ENCODE measurements at regions of chr6 and their contacts with region 1.

Region 1: DNA sequence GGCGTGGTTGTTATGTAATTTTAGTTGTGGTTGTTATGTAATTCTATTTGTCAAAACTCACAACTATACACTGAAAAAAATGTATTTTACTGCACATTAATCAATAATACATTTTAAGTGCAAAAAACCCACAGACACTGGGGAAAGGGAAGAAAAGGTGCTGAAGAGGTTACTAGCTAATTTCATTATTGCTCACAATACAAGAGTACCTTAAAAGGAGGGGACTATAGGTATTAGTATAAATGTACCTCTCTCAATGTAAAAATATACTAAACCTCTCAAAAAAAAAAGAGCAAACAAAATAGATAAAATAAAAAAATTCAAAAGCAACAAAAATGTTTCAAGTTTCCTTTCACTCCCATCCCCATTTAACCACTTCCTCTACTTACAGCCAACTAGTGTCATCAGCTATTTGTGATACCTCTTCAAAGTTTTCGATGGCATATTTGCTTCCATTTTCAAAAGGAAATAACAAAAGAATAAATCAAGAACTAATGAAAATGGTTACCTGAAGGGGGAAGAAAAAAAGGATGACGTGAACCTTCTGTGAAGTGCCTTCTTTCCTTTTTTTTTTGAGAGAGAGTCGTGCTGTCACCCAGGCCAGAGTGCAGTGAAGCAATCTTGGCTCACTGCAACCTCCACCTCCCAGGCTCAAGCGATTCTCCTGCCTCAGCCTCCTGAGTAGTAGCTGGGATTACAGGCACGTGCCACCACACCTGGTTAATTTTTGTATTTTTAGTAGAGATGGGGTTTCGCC is 30.2 kb downstream of the RANBP9 start:
- DNase-seq: peak in 7 of 9 donors; percentile 41 to 78 (median 65)
- ATAC-seq: peak; percentile 82
- H3K4me3 ChIP-seq: peak overlapping the region; percentile 4
- H3K4me3 Mint-ChIP-seq: peak overlapping the region; percentile 38 to 75 (median 58)
- H3K27ac ChIP-seq: peak overlapping the region; percentile 54
- H3K27ac Mint-ChIP-seq: peak overlapping the region; percentile 63 to 92 (median 86)
- H3K4me1 ChIP-seq: peaks cover 36 to 42% of the 10 kb centered on the region in 2 donors
- H3K4me1 Mint-ChIP-seq: peaks cover 34 to 74% (median 65%) of the 10 kb centered on the region in 7 donors
- H3K27me3 ChIP-seq: no peaks in the 10 kb centered on the region
- H3K27me3 Mint-ChIP-seq: no peaks in the 10 kb centered on the region

Region 2: GRCh38 chr6:13660273-13660672 is 21.2 kb before region 1 on chr6:
- CTCF ChIA-PET with region 1: no interaction called
- POLR2A ChIA-PET with region 1: no interaction called
- intact Hi-C with region 1: no loop called
- DNase-seq: no peak
- ATAC-seq: no peak
- H3K4me3 ChIP-seq: no peak overlapping the region
- H3K4me3 Mint-ChIP-seq: peak overlapping the region in 2 of 10 donors; percentile 27 to 34
- H3K27ac ChIP-seq: no peak overlapping the region
- H3K27ac Mint-ChIP-seq: peak overlapping the region in 4 of 9 donors; percentile 23 to 68 (median 42)
- H3K4me1 ChIP-seq: peaks cover 5 to 34% of the 10 kb centered on the region in 2 donors
- H3K4me1 Mint-ChIP-seq: peaks cover 48 to 87% (median 77%) of the 10 kb centered on the region in 7 donors
- H3K27me3 ChIP-seq: no peaks in the 10 kb centered on the region
- H3K27me3 Mint-ChIP-seq: no peaks in the 10 kb centered on the region

Region 3: DNA sequence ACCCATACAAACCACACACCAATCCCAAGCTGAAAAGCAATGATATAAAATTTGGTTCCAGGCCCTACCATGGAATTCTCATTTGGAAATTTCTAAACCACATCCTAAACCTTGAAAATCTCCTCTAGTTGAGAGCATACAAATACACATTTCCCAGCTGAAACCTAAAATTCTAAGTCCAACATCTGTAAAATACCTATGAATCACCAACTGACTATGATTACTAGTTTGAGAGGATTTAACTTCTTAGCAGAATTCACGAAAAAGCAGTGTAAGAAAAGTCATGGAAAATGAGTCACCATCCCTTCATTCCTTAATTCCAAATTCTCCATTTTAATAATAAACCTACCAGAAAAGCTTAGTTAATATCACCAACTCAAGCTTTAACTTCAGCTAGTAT is 14.7 kb after region 1 on chr6:
- CTCF ChIA-PET with region 1: interaction called, 5 read pairs
- POLR2A ChIA-PET with region 1: interaction called, 10 read pairs
- intact Hi-C with region 1: loop called (anchors 1 to 2 kb)
- DNase-seq: no peak
- ATAC-seq: no peak
- H3K4me3 ChIP-seq: no peak overlapping the region
- H3K4me3 Mint-ChIP-seq: peak overlapping the region in 4 of 10 donors; percentile 28 to 66 (median 39)
- H3K27ac ChIP-seq: peak overlapping the region; percentile 60
- H3K27ac Mint-ChIP-seq: peak overlapping the region in 7 of 9 donors; percentile 56 to 92 (median 83)
- H3K4me1 ChIP-seq: peaks cover 31 to 42% of the 10 kb centered on the region in 2 donors
- H3K4me1 Mint-ChIP-seq: peaks cover 42 to 82% (median 73%) of the 10 kb centered on the region in 7 donors
- H3K27me3 ChIP-seq: no peaks in the 10 kb centered on the region
- H3K27me3 Mint-ChIP-seq: no peaks in the 10 kb centered on the region

Region 4: DNA sequence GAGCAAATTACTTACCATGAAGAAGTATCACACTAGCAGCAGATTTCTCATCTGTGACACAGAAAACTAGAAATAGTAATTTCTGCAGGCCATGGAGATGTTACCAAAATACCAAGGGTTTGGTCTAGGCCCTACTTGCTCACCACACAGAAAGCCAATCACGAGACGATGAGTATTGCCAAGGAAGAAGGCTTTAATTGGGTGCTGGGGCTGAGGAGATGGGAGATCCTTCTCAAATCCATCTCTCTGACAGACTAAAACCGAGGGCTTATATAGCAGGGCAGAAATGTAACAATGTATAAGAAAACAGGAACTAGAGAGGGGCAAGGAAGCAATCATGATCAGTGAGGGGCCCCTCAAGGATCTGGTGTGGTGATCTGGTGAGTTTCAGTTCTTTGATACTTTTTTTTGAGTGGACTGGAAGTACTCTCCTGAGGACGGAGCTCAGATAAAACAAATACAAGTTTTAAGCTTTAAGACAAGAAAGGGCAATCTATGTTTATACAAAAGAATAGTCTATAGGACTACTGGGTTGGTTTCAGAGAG is 284.2 kb after region 1 on chr6:
- CTCF ChIA-PET with region 1: no interaction called
- POLR2A ChIA-PET with region 1: no interaction called
- intact Hi-C with region 1: no loop called
- DNase-seq: no peak
- ATAC-seq: no peak
- H3K4me3 ChIP-seq: no peak overlapping the region
- H3K4me3 Mint-ChIP-seq: no peak overlapping the region
- H3K27ac ChIP-seq: no peak overlapping the region
- H3K27ac Mint-ChIP-seq: no peak overlapping the region
- H3K4me1 ChIP-seq: no peaks in the 10 kb centered on the region
- H3K4me1 Mint-ChIP-seq: no peaks in the 10 kb centered on the region
- H3K27me3 ChIP-seq: no peaks in the 10 kb centered on the region
- H3K27me3 Mint-ChIP-seq: peaks cover 21 to 50% (median 41%) of the 10 kb centered on the region in 5 donors

Measured in naive thymus-derived CD4-positive, alpha-beta T cell (primary cell).